B cell (primary cell): ENCODE measurements at regions of chr3 and their contacts with region 1.

Region 1: GRCh38 chr3:119676771-119677640 is at the start of gene COX17:
- DNase-seq: peak; percentile 99
- ATAC-seq: peak; percentile 83
- H3K4me3 ChIP-seq: peak within 1 kb of the TSS; percentile 68 to 79 (median 74)
- H3K4me3 Mint-ChIP-seq: peak within 1 kb of the TSS; percentile 88
- H3K27ac ChIP-seq: peak within 1 kb of the TSS; percentile 89 to 96
- H3K27ac Mint-ChIP-seq: peak within 1 kb of the TSS; percentile 96
- H3K4me1 ChIP-seq: peaks cover 17% of the 10 kb centered on the region in 2 donors
- H3K4me1 Mint-ChIP-seq: peaks cover 27% of the 10 kb centered on the region
- H3K27me3 ChIP-seq: no peaks in the 10 kb centered on the region
- H3K27me3 Mint-ChIP-seq: no peaks in the 10 kb centered on the region
- CTCF ChIP-seq: no peak
- total RNA-seq, gene COX17: 47.8 and 49.1 TPM in 2 replicates

Region 2: DNA sequence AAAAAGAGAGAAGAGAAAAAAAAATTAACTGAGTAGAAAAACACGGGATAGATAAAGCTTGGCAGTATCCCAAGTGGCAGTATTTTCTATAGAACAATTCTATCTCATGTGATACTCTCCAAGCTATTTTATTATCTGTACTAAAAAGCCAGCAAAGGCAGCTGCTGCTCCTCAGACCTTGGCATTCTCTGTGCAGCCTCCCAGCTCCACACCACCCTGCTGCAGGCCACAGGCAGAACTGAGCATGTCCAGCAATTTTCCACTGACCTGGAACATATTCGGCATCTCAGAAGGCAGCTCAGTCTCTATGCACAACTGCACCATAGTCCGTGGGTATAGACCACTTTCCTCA is 1803.8 kb before region 1 on chr3:
- CTCF ChIA-PET with region 1: no interaction called
- POLR2A ChIA-PET with region 1: no interaction called
- intact Hi-C with region 1: no loop called
- DNase-seq: no peak
- ATAC-seq: no peak
- H3K4me3 ChIP-seq: no peak overlapping the region
- H3K4me3 Mint-ChIP-seq: no peak overlapping the region
- H3K27ac ChIP-seq: no peak overlapping the region
- H3K27ac Mint-ChIP-seq: no peak overlapping the region
- H3K4me1 ChIP-seq: no peaks in the 10 kb centered on the region
- H3K4me1 Mint-ChIP-seq: no peaks in the 10 kb centered on the region
- H3K27me3 ChIP-seq: no peaks in the 10 kb centered on the region
- H3K27me3 Mint-ChIP-seq: no peaks in the 10 kb centered on the region
- CTCF ChIP-seq: no peak

Region 3: DNA sequence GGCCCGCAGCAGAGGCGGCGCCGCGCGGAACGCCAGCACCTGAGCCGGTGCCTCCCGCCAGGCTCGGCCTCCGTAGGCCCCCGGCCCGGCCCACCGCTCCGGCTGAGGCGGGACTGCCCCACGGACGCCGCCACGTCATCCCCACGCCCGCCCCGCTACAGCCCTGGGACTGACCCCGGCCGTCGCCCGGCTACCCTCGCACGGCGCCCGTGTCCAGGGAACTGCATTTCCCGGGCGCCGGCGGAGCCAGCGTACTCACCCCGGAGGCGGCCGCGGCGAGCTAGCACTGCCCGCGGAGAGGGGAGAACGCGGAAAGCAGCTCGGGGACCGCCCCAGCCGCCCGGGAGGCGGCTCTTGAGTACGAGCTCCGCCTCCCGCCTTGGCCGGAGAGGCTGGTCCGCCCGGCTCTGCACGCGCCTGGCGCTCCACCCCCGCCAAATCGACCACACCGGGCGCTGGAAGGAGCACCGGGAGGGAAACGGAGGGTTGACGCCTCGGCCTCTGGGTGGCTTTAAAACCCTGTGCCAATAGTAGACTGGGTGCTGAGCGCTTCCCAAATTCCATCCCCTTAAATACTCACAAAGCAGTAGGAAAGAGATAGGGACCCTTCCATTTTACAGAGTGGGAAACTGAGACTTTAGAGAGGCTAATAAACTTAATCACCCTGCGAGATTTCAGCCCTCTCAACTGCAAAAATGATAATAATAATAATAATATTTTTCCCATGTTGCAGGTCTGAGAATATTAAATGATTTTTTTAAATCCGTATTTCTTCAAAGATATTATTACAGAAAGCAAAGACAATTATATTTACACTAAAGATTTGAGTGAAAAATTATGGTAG is 436.2 kb before region 1 on chr3 and contains the start of gene B4GALT4:
- CTCF ChIA-PET with region 1: interaction called, 6 read pairs
- POLR2A ChIA-PET with region 1: interaction called, 10 read pairs
- intact Hi-C with region 1: loop called (anchors 1 kb)
- DNase-seq: peak; percentile 83
- ATAC-seq: peak; percentile 90
- H3K4me3 ChIP-seq: peak within 1 kb of the TSS; percentile 57 to 82 (median 72)
- H3K4me3 Mint-ChIP-seq: peak within 1 kb of the TSS; percentile 86
- H3K27ac ChIP-seq: peak within 1 kb of the TSS; percentile 62 to 93
- H3K27ac Mint-ChIP-seq: peak within 1 kb of the TSS; percentile 81
- H3K4me1 ChIP-seq: peaks cover 30 to 34% of the 10 kb centered on the region in 2 donors
- H3K4me1 Mint-ChIP-seq: peaks cover 30% of the 10 kb centered on the region
- H3K27me3 ChIP-seq: no peaks in the 10 kb centered on the region
- H3K27me3 Mint-ChIP-seq: no peaks in the 10 kb centered on the region
- CTCF ChIP-seq: no peak
- total RNA-seq, gene B4GALT4: 19.3 and 21.9 TPM in 2 replicates

Region 4: GRCh38 chr3:119463171-119464169 is 213.5 kb before region 1 on chr3 and contains the start of gene TMEM39A:
- CTCF ChIA-PET with region 1: interaction called, 8 read pairs
- POLR2A ChIA-PET with region 1: interaction called, 4 read pairs
- intact Hi-C with region 1: loop called (anchors 1 kb)
- DNase-seq: peak; percentile 99
- ATAC-seq: peak; percentile 87
- H3K4me3 ChIP-seq: peak within 1 kb of the TSS; percentile 76 to 99 (median 85)
- H3K4me3 Mint-ChIP-seq: peak within 1 kb of the TSS; percentile 96
- H3K27ac ChIP-seq: peak within 1 kb of the TSS; percentile 68 to 88
- H3K27ac Mint-ChIP-seq: peak within 1 kb of the TSS; percentile 99
- H3K4me1 ChIP-seq: peaks cover 24 to 25% of the 10 kb centered on the region in 2 donors
- H3K4me1 Mint-ChIP-seq: peaks cover 37% of the 10 kb centered on the region
- H3K27me3 ChIP-seq: no peaks in the 10 kb centered on the region
- H3K27me3 Mint-ChIP-seq: no peaks in the 10 kb centered on the region
- CTCF ChIP-seq: no peak
- total RNA-seq, gene TMEM39A: 39.9 and 50.3 TPM in 2 replicates

Region 5: GRCh38 chr3:119524931-119525662 is 151.9 kb before region 1 on chr3:
- CTCF ChIA-PET with region 1: interaction called, 34 read pairs
- POLR2A ChIA-PET with region 1: no interaction called
- intact Hi-C with region 1: loop called (anchors 1 kb)
- DNase-seq: peak; percentile 46
- ATAC-seq: peak; percentile 60
- H3K4me3 ChIP-seq: no peak overlapping the region
- H3K4me3 Mint-ChIP-seq: no peak overlapping the region
- H3K27ac ChIP-seq: peak overlapping the region in 1 of 2 donors; percentile 14
- H3K27ac Mint-ChIP-seq: no peak overlapping the region
- H3K4me1 ChIP-seq: no peaks in the 10 kb centered on the region
- H3K4me1 Mint-ChIP-seq: no peaks in the 10 kb centered on the region
- H3K27me3 ChIP-seq: no peaks in the 10 kb centered on the region
- H3K27me3 Mint-ChIP-seq: no peaks in the 10 kb centered on the region
- CTCF ChIP-seq: peak; percentile 54

Region 6: DNA sequence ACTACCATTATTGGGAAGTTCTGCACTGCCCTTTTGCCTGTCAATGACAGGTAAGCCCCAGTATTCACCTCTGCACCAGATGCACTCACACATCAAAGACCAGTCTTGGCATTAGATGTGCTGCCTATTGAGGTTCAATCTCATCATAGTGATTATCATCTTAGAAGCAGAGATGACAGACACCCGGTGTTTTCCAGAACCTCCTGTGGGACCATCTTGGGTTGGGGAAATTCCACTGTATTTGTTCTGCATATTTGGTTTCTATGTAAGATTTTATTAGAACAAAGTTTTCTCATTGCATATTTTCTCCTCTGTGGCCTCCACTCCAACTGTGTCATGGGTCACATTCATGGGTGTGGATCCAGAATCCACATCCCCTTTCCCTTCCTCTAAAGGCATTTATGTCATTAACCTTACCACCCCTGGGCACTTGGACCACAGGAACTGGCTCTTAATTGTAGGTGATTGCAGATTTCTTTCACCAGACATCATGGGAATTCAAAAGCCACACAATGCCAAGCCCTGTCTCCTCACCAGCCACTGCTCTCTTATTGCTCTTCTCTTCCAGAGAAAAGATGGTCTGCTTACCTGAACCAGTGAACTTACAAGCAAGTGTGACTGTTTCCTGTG is 48.1 kb before region 1 on chr3:
- CTCF ChIA-PET with region 1: interaction called, 5 read pairs
- POLR2A ChIA-PET with region 1: interaction called, 3 read pairs
- intact Hi-C with region 1: loop called (anchors 1 kb)
- DNase-seq: peak; percentile 76
- ATAC-seq: peak; percentile 61
- H3K4me3 ChIP-seq: no peak overlapping the region
- H3K4me3 Mint-ChIP-seq: peak overlapping the region; percentile 73
- H3K27ac ChIP-seq: peak overlapping the region; percentile 26 to 83
- H3K27ac Mint-ChIP-seq: peak overlapping the region; percentile 90
- H3K4me1 ChIP-seq: peaks cover 29 to 30% of the 10 kb centered on the region in 2 donors
- H3K4me1 Mint-ChIP-seq: peaks cover 46% of the 10 kb centered on the region
- H3K27me3 ChIP-seq: no peaks in the 10 kb centered on the region
- H3K27me3 Mint-ChIP-seq: no peaks in the 10 kb centered on the region
- CTCF ChIP-seq: no peak

Region 7: DNA sequence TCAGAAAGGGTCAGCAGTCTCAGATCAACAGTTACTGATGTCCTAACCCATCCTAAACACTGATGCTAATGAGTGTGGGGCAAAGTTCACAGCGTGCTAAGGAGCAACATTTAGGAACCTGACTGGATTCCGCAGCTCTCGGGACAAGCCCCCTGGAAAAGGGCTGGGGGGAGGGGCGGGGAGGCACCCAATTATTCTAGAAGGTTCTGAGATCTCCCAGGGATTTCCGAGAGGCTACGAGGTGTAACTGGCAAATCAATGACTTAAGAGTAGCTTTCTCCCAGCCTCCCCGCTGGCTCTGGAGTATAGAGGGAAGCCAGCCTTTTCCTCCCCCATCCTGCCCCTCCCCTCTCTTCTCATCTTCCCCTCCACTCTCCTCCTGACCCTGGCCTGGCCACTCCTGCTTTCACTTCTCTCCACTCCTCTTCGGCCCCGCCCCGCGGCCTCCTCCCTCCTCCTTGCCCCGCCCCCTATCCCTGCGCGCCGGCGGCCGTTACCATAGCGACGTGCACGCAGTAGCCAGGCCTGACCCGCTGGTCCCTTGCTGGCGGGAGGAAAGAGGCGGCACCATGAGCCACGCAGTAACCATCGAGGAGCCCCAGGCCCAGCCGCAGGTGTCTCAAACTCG is 25.6 kb after region 1 on chr3 and contains the start of gene CFAP91:
- CTCF ChIA-PET with region 1: interaction called, 7 read pairs
- POLR2A ChIA-PET with region 1: interaction called, 4 read pairs
- intact Hi-C with region 1: loop called (anchors 1 kb)
- DNase-seq: peak; percentile 93
- ATAC-seq: peak; percentile 95
- H3K4me3 ChIP-seq: peak within 1 kb of the TSS in 4 of 5 experiments; percentile 47 to 67 (median 62)
- H3K4me3 Mint-ChIP-seq: peak within 1 kb of the TSS; percentile 88
- H3K27ac ChIP-seq: peak within 1 kb of the TSS in 1 of 2 donors; percentile 37
- H3K27ac Mint-ChIP-seq: peak within 1 kb of the TSS; percentile 82
- H3K4me1 ChIP-seq: peaks cover 25 to 32% of the 10 kb centered on the region in 2 donors
- H3K4me1 Mint-ChIP-seq: peaks cover 39% of the 10 kb centered on the region
- H3K27me3 ChIP-seq: no peaks in the 10 kb centered on the region
- H3K27me3 Mint-ChIP-seq: no peaks in the 10 kb centered on the region
- CTCF ChIP-seq: no peak
- total RNA-seq, gene CFAP91: 6.4 and 7.2 TPM in 2 replicates